Activated CD8-positive, alpha-beta T cell treated with anti-CD3 and anti-CD28 coated beads for 36 hours (primary cell): ENCODE measurements at regions of chr4 and their contacts with region 1.

Region 1: DNA sequence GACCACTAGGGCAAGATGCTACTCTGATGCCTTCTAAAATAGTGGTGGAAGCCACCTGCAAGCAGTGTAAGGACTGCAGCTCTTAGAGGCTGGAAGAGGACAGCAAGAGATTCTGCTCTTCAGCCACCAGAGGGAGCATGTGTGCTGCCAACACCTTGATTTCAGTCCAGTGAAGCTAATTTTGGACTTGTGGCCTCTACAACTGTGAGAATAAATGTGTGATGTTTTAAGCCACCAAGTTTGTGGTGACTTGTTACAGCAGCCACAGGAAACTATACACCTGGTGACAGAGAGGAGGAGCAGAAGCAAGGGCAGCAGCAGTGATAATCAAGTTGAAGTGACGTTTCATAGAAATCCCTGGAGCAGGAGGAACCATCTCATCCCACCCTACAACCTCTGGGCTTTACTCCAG is 55.9 kb downstream of the FGFBP1 start:
- DNase-seq: peak; percentile 59
- ATAC-seq: peak; percentile 92
- H3K4me3 Mint-ChIP-seq: no peak overlapping the region
- H3K27ac Mint-ChIP-seq: no peak overlapping the region
- H3K4me1 Mint-ChIP-seq: peaks cover 1% of the 10 kb centered on the region
- H3K27me3 Mint-ChIP-seq: peaks cover 2% of the 10 kb centered on the region
- CTCF ChIP-seq: peak; percentile 98

Region 2: DNA sequence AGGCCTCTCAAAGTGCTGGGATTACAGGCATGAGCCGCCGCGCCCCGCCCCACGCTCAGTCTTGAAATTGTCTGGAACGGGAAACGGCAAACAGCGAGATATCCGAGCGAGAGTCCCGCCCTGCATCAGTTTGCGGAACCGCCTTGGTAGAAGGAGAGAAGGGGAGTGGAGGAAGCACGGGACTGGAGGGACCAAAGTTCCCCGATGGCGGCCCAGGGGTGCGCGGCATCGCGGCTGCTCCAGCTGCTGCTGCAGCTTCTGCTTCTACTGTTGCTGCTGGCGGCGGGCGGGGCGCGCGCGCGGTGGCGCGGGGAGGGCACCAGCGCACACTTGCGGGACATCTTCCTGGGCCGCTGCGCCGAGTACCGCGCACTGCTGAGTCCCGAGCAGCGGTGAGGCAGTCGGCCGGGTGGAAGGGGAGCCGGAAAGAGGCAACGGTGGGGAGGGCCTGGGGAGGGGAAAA is 179.7 kb before region 1 on chr4 and contains the start of gene BST1:
- CTCF ChIA-PET with region 1: no interaction called
- POLR2A ChIA-PET with region 1: no interaction called
- intact Hi-C with region 1: no loop called
- DNase-seq: peak; percentile 59
- ATAC-seq: peak; percentile 81
- H3K4me3 Mint-ChIP-seq: peak within 1 kb of the TSS; percentile 75
- H3K27ac Mint-ChIP-seq: peak within 1 kb of the TSS; percentile 12
- H3K4me1 Mint-ChIP-seq: peaks cover 3% of the 10 kb centered on the region
- H3K27me3 Mint-ChIP-seq: peaks cover 21% of the 10 kb centered on the region
- CTCF ChIP-seq: no peak
- total RNA-seq, gene BST1: 0.20 to 0.65 TPM

Region 3: GRCh38 chr4:15729910-15730533 is 152.7 kb before region 1 on chr4:
- CTCF ChIA-PET with region 1: interaction called, 16 read pairs
- POLR2A ChIA-PET with region 1: no interaction called
- intact Hi-C with region 1: loop called (anchors 10 kb)
- DNase-seq: peak; percentile 43
- ATAC-seq: peak; percentile 76
- H3K4me3 Mint-ChIP-seq: no peak overlapping the region
- H3K27ac Mint-ChIP-seq: no peak overlapping the region
- H3K4me1 Mint-ChIP-seq: peaks cover 18% of the 10 kb centered on the region
- H3K27me3 Mint-ChIP-seq: no peaks in the 10 kb centered on the region
- CTCF ChIP-seq: peak; percentile 94

Region 4: GRCh38 chr4:15848191-15848842 is 34.4 kb before region 1 on chr4:
- CTCF ChIA-PET with region 1: interaction called, 16 read pairs
- POLR2A ChIA-PET with region 1: no interaction called
- intact Hi-C with region 1: no loop called
- DNase-seq: no peak
- ATAC-seq: no peak
- H3K4me3 Mint-ChIP-seq: no peak overlapping the region
- H3K27ac Mint-ChIP-seq: no peak overlapping the region
- H3K4me1 Mint-ChIP-seq: peaks cover 1% of the 10 kb centered on the region
- H3K27me3 Mint-ChIP-seq: no peaks in the 10 kb centered on the region
- CTCF ChIP-seq: no peak

Region 5: DNA sequence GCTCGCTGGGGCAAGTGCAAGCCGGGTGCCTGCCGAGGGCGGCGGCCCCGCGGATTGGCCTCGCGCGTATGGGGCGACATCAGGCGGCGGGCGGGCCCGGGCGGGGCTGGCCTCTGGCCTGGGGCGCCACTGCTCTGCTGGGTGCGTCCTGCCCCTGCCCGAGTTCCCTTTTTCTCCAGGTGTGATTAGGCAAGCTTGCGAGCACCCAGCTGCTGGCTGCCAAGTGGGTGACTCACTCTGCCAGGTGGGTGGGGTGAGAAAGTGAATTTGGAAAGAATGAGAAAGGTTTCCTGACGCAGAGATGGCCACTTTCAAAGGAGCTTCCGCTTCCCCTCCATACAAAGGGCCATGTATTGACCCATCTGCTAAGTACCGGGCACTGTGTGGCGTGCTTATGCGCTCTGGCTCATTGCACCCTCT is 23.4 kb after region 1 on chr4:
- CTCF ChIA-PET with region 1: interaction called, 66 read pairs
- POLR2A ChIA-PET with region 1: no interaction called
- intact Hi-C with region 1: no loop called
- DNase-seq: peak; percentile 62
- ATAC-seq: peak; percentile 78
- H3K4me3 Mint-ChIP-seq: no peak overlapping the region
- H3K27ac Mint-ChIP-seq: no peak overlapping the region
- H3K4me1 Mint-ChIP-seq: peaks cover 7% of the 10 kb centered on the region
- H3K27me3 Mint-ChIP-seq: peaks cover 21% of the 10 kb centered on the region
- CTCF ChIP-seq: no peak

Region 6: DNA sequence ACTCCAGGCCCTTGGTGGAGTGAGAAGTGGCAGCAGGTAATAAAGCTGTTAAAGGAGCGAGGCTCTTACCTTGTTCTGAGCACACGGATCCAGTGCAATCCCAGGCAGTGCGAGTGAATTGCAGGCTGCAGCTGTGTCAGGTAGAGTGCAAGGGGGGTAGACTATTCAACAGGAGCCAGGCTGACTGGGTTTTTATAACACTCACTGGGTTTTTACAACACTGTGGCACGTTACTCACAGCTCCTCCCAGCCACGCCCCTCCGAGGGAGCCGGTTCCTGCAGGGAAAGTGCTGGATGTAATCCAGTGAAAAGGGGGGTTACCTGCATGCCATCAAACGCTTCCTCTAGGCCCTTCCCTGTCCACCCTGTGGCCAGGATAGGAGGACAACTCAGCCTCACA is 55.5 kb after region 1 on chr4:
- CTCF ChIA-PET with region 1: interaction called, 16 read pairs
- POLR2A ChIA-PET with region 1: no interaction called
- intact Hi-C with region 1: no loop called
- DNase-seq: no peak
- ATAC-seq: no peak
- H3K4me3 Mint-ChIP-seq: no peak overlapping the region
- H3K27ac Mint-ChIP-seq: no peak overlapping the region
- H3K4me1 Mint-ChIP-seq: peaks cover 5% of the 10 kb centered on the region
- H3K27me3 Mint-ChIP-seq: peaks cover 10% of the 10 kb centered on the region
- CTCF ChIP-seq: no peak

Region 7: DNA sequence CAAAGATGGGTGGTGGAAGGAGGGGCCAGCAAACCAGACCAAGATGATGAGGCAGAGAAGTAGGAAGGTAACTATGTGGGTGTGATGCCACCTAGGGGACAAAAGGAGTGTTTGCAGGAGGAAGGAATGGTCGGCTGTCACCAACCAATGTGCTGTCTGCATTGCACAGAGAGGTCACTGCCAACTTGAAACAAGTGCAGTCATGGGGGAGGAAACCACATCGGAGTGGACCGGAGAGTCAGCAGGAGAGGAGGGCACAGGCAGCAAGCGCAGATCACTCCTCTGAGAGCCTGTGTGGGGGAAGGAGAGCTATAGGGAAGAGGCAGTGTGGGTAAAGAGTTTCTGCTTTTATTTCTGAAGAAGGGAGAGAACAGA is 118.8 kb after region 1 on chr4:
- CTCF ChIA-PET with region 1: interaction called, 55 read pairs
- POLR2A ChIA-PET with region 1: no interaction called
- intact Hi-C with region 1: loop called (anchors 2 kb)
- DNase-seq: peak; percentile 73
- ATAC-seq: peak; percentile 96
- H3K4me3 Mint-ChIP-seq: no peak overlapping the region
- H3K27ac Mint-ChIP-seq: no peak overlapping the region
- H3K4me1 Mint-ChIP-seq: peaks cover 3% of the 10 kb centered on the region
- H3K27me3 Mint-ChIP-seq: no peaks in the 10 kb centered on the region
- CTCF ChIP-seq: peak; percentile 77